GM12878 (cell line): ENCODE measurements at regions of chr3 and their contacts with region 1.

Region 1: DNA sequence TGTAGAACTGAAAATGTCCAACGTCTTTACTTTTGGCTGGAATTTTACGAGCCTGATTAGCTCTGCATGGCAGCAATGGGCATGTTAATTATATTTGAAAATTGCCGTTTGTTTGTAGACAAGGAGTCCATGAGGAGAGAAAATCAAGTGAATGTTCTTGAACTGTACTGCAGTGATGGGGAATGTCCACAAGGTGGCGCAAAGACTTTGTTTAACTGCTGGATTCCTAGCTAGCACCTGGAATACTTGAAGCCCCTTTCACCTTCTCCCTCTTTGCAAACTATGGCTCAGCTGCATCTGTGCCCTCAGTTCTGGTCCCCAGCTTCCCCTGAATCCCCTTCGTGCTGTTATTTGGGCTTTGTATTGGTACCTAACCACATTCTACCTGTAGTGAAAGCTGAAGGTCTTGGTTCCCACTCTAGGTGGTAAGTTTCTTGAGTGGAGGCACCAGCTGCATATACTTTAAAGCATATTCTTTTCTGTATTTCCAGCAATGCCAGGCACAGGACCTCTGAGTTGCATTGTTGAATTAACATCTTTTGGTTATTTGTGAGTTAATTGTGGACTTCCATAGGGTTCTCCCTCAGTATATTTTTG is 25.3 kb downstream of the EXOG start:
- DNase-seq: peak; percentile 27
- ATAC-seq: peak; percentile 78
- H3K4me3 ChIP-seq: no peak overlapping the region
- H3K27ac ChIP-seq: no peak overlapping the region
- H3K4me1 ChIP-seq: no peaks in the 10 kb centered on the region
- H3K27me3 ChIP-seq: no peaks in the 10 kb centered on the region
- CTCF ChIP-seq: peak; percentile 85 to 95 (median 91)
- EP300 ChIP-seq: no peak
- POLR2A ChIP-seq: no peak
- RAD21 ChIP-seq: peak; percentile 68

Region 2: GRCh38 chr3:37963016-37963415 is 558.5 kb before region 1 on chr3:
- CTCF ChIA-PET with region 1: no interaction called
- POLR2A ChIA-PET with region 1: no interaction called
- RAD21 ChIA-PET with region 1: no interaction called
- SMC1A ChIA-PET with region 1: no interaction called
- in situ Hi-C with region 1: no loop called
- intact Hi-C with region 1: no loop called
- DNase-seq: no peak
- ATAC-seq: no peak
- H3K4me3 ChIP-seq: no peak overlapping the region
- H3K27ac ChIP-seq: no peak overlapping the region
- H3K4me1 ChIP-seq: no peaks in the 10 kb centered on the region
- H3K27me3 ChIP-seq: no peaks in the 10 kb centered on the region; a peak in 1 of 4 replicates
- CTCF ChIP-seq: no peak
- EP300 ChIP-seq: no peak
- POLR2A ChIP-seq: no peak
- RAD21 ChIP-seq: no peak

Region 3: DNA sequence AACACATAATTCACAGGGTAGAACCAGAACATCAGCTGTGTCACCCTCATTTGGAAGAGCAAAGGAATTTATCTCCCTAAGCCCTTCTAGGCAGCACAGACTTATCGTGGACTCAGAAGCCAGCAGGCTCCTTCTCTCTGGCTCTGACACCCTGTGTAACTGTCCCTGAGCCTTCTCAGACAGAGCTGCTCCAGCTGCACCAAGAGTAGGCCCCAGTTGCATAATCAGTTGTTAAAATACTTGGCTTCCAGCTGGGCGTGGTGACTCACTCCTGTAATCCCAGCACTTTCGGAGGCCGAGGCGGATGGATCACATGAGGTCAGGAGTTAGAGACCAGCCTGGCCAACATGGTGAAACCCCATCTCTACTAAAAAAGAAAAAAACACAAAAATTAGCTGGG is 117.2 kb before region 1 on chr3:
- CTCF ChIA-PET with region 1: no interaction called
- POLR2A ChIA-PET with region 1: no interaction called
- RAD21 ChIA-PET with region 1: no interaction called
- SMC1A ChIA-PET with region 1: no interaction called
- in situ Hi-C with region 1: no loop called
- intact Hi-C with region 1: no loop called
- DNase-seq: no peak
- ATAC-seq: no peak
- H3K4me3 ChIP-seq: no peak overlapping the region
- H3K27ac ChIP-seq: no peak overlapping the region
- H3K4me1 ChIP-seq: no peaks in the 10 kb centered on the region
- H3K27me3 ChIP-seq: no peaks in the 10 kb centered on the region
- CTCF ChIP-seq: no peak
- EP300 ChIP-seq: no peak
- POLR2A ChIP-seq: no peak
- RAD21 ChIP-seq: no peak

Region 4: DNA sequence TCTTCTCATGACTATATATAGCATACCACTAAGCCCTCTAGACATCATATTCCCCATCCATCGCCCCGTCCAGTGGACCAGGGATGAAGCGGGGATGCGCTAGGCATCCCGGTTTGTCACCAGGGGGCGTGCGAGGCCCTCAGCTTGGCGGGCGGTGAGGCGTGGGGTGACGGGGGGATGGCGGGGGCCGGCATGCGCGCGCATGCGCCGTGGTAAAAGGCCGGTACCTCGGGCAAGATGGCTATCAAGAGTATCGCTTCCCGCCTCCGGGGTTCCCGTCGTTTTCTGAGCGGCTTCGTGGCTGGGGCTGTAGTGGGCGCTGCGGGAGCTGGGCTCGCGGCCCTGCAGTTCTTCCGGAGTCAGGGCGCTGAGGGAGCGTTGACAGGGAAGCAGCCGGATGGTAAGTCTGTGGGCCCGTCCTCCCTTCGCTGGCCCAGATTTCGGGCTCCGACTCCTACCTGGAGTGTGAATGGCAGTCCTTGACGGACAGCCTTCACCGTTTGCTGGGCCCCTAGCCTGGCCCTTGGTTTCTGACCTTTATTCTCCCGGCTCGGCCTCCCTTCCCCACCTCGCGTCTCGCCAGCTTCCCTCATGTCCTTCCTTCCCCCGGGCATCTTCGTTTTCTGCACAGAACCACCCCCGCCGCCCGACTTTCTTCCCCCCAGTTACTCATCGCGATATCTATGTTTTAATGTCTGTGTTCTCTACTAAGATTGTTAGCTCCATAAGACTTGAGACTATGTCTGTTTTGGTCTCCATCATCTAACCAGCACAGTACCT is 25.2 kb before region 1 on chr3 and contains the start of gene EXOG:
- CTCF ChIA-PET with region 1: interaction called, 44 read pairs
- POLR2A ChIA-PET with region 1: no interaction called
- RAD21 ChIA-PET with region 1: interaction called, 3 read pairs
- SMC1A ChIA-PET with region 1: interaction called, 11 read pairs
- in situ Hi-C with region 1: no loop called
- intact Hi-C with region 1: no loop called
- DNase-seq: peak; percentile 67
- ATAC-seq: peak; percentile 93
- H3K4me3 ChIP-seq: peak within 1 kb of the TSS; percentile 81
- H3K27ac ChIP-seq: peak within 1 kb of the TSS; percentile 82
- H3K4me1 ChIP-seq: no peaks in the 10 kb centered on the region
- H3K27me3 ChIP-seq: no peaks in the 10 kb centered on the region
- CTCF ChIP-seq: peak; percentile 81 to 96 (median 86)
- EP300 ChIP-seq: no peak
- POLR2A ChIP-seq: peak; percentile 77
- RAD21 ChIP-seq: peak; percentile 60
- polyA plus RNA-seq, gene EXOG: 7.8 to 8.6 TPM

Region 5: DNA sequence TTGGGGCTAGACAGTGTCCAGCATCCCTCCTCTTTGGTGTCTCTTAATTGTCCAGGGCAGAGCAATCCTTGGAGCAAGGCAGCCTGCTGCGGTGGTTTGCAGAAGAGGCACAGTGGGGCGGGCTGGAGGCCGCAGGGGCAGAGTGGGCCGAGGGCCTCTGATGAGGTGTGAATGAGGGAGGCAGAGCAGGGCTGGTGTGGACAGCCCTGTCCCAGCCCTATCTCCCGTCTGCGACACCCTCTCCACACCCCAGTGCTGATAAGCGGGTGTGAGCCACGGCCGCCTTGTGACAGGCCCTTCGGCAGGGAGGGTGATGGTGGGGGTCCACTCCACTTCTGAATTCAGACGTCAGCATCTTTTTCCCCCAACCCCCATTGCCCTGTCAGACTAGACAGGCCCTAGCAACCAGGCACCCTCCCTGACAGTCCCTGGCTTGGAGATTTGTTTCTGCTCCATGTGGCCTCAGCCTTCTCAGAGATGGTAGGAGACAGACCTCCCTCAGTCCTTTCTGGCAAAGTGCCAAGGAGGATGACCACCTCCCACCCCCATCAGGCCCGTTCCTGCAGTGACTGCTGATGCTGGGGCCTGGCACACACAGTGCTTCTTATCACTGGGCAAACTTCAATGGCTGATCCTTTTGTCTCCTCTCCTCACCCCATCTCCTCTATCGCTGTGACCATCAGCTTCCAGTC is 11.9 kb after region 1 on chr3:
- CTCF ChIA-PET with region 1: interaction called, 12 read pairs
- POLR2A ChIA-PET with region 1: no interaction called
- RAD21 ChIA-PET with region 1: interaction called, 3 read pairs
- SMC1A ChIA-PET with region 1: interaction called, 9 read pairs
- in situ Hi-C with region 1: no loop called
- intact Hi-C with region 1: no loop called
- DNase-seq: no peak
- ATAC-seq: no peak
- H3K4me3 ChIP-seq: no peak overlapping the region
- H3K27ac ChIP-seq: no peak overlapping the region
- H3K4me1 ChIP-seq: no peaks in the 10 kb centered on the region
- H3K27me3 ChIP-seq: no peaks in the 10 kb centered on the region
- CTCF ChIP-seq: no peak
- EP300 ChIP-seq: no peak
- POLR2A ChIP-seq: no peak
- RAD21 ChIP-seq: no peak

Region 6: GRCh38 chr3:38644016-38644661 is 122.7 kb after region 1 on chr3:
- CTCF ChIA-PET with region 1: interaction called, 19 read pairs
- POLR2A ChIA-PET with region 1: no interaction called
- RAD21 ChIA-PET with region 1: no interaction called
- SMC1A ChIA-PET with region 1: interaction called, 8 read pairs
- in situ Hi-C with region 1: loop called (anchors 5 kb)
- intact Hi-C with region 1: no loop called
- DNase-seq: no peak
- ATAC-seq: no peak
- H3K4me3 ChIP-seq: no peak overlapping the region
- H3K27ac ChIP-seq: no peak overlapping the region
- H3K4me1 ChIP-seq: no peaks in the 10 kb centered on the region
- H3K27me3 ChIP-seq: peaks cover 4 to 6% of the 10 kb centered on the region in 2 experiments; a peak in 3 of 4 replicates
- CTCF ChIP-seq: no peak
- EP300 ChIP-seq: no peak
- POLR2A ChIP-seq: no peak
- RAD21 ChIP-seq: no peak

Region 7: DNA sequence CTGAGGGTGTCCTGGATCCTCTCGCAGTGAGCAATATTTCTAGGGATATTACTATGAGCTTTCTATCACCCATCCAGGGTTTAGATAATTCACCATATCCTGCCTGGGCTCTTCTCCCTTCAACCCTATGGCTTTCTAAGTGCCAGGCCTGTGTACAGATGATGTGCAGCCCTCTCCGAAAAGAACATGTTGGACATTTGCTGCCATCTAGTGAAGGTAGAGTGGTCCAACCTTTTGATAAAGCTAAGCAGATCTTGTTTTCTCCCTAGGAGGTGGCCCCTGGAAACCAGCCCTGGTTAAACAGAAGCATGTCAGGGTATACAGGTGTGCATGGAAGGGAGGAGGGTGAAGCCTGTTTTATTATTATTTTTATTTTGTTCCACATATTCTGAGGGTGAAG is 322.4 kb after region 1 on chr3:
- CTCF ChIA-PET with region 1: interaction called, 10 read pairs
- POLR2A ChIA-PET with region 1: no interaction called
- RAD21 ChIA-PET with region 1: interaction called, 3 read pairs
- SMC1A ChIA-PET with region 1: interaction called, 4 read pairs
- in situ Hi-C with region 1: no loop called
- intact Hi-C with region 1: loop called (anchors 10 kb)
- DNase-seq: no peak
- ATAC-seq: peak; percentile 42; the same call in 2 of the 3 replicates
- H3K4me3 ChIP-seq: no peak overlapping the region
- H3K27ac ChIP-seq: no peak overlapping the region
- H3K4me1 ChIP-seq: no peaks in the 10 kb centered on the region
- H3K27me3 ChIP-seq: no peaks in the 10 kb centered on the region; a peak in 1 of 4 replicates
- CTCF ChIP-seq: peak; percentile 18 to 32 (median 22); a peak in 4 of 6 replicates
- EP300 ChIP-seq: no peak
- POLR2A ChIP-seq: no peak
- RAD21 ChIP-seq: peak; percentile 36; the same call in 1 of the 2 replicates

Region 8: DNA sequence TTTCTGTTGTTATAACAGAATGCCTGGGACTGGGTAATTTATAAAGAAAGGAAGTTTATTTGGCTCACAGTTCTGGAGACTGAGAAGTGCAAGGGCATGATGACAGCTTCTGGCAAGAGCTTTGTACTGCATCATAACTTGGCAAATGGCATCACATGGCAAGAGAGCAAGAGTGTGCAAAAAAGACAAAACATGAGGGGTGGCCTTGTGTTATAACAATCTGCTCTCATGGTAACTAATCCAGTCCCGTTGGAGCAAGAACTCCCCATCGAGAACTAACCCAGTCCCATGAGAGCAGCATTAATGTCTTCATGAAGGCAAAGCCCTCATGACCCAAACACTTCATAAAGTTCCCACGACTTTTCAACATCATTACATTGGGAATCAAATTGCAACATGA is 507.1 kb after region 1 on chr3:
- CTCF ChIA-PET with region 1: interaction called, 31 read pairs
- POLR2A ChIA-PET with region 1: no interaction called
- RAD21 ChIA-PET with region 1: interaction called, 10 read pairs
- SMC1A ChIA-PET with region 1: interaction called, 26 read pairs
- in situ Hi-C with region 1: no loop called
- intact Hi-C with region 1: no loop called
- DNase-seq: no peak
- ATAC-seq: no peak
- H3K4me3 ChIP-seq: no peak overlapping the region
- H3K27ac ChIP-seq: no peak overlapping the region
- H3K4me1 ChIP-seq: no peaks in the 10 kb centered on the region
- H3K27me3 ChIP-seq: peaks cover 0 to 2% of the 10 kb centered on the region in 2 experiments; a peak in 1 of 4 replicates
- CTCF ChIP-seq: no peak
- EP300 ChIP-seq: no peak
- POLR2A ChIP-seq: no peak
- RAD21 ChIP-seq: no peak